ENCODE measurements at regions of chr22 and their contacts with region 1.

Region 1: DNA sequence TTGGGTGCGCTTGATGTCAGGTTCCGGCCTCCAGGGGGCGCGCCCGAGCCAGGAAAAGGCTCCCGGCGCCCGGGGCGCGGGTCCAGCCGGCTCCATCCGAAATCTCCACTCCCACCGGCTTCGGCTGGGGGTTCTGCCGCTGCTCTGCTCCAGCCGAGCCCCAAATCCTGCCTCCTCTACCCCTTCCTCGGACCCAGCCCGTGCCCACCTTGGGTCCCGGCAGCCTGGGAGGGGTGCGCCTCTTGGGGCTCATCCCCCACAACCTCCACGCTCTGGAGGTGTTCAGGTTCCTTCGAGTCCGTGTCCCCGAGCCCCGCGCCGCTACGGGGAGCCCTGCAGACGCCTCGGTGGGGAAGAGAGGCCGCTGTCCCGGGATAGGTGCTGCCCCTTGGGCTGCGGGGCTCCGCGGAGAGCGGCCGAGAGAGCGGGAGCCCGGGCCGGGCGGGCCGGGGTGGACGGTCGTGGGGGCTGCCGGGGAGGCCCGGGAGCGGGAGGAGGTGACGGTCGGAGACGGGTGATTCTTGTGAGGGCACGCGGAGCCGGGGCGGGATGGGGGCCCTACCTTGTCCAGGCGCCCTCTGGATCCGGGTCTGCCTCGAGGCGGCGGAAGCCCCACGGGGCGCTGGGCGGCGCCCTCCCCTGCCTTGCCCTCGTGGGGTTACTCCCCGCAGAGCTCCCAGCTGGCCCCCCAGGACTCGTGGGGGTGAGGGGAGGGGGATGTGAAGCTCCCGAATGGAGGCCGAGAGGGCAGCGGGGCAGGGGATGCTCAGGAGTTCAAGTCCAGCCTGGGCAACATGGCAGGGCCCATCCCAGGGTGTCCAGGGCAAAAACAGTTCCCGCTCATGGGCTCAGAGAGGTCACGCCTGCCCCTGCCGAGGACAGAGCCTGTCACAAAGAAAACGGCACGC is 13.2 kb upstream of the CYB5R3 start:
- DNase-seq: peak in 1 of 2 donors; percentile 88
- H3K4me3 ChIP-seq: peak overlapping the region; percentile 43 to 65
- H3K27ac ChIP-seq: peak overlapping the region; percentile 17 to 34
- H3K4me1 ChIP-seq: peaks cover 0 to 8% of the 10 kb centered on the region in 2 donors
- H3K27me3 ChIP-seq: no peaks in the 10 kb centered on the region
- CTCF ChIP-seq: peak; percentile 75 to 92 (median 77)

Region 2: GRCh38 chr22:42644422-42645340 is 17.7 kb before region 1 on chr22:
- intact Hi-C with region 1: no loop called
- DNase-seq: no peak
- H3K4me3 ChIP-seq: peak overlapping the region; percentile 74 to 97
- H3K27ac ChIP-seq: peak overlapping the region; percentile 88 to 98
- H3K4me1 ChIP-seq: peaks cover 19 to 63% of the 10 kb centered on the region in 2 donors
- H3K27me3 ChIP-seq: no peaks in the 10 kb centered on the region
- CTCF ChIP-seq: no peak

Region 3: GRCh38 chr22:42688241-42689211 is 26.2 kb after region 1 on chr22:
- intact Hi-C with region 1: loop called (anchors 1 kb)
- DNase-seq: peak; percentile 79 to 98
- H3K4me3 ChIP-seq: peak overlapping the region in 1 of 2 donors; percentile 31
- H3K27ac ChIP-seq: peak overlapping the region; percentile 93 to 97
- H3K4me1 ChIP-seq: peaks cover 39 to 56% of the 10 kb centered on the region in 2 donors
- H3K27me3 ChIP-seq: no peaks in the 10 kb centered on the region
- CTCF ChIP-seq: no peak

Region 4: GRCh38 chr22:42697542-42698013 is 35.2 kb after region 1 on chr22:
- intact Hi-C with region 1: loop called (anchors 5 kb)
- DNase-seq: peak; percentile 92 to 97
- H3K4me3 ChIP-seq: no peak overlapping the region
- H3K27ac ChIP-seq: peak overlapping the region; percentile 92 to 93
- H3K4me1 ChIP-seq: peaks cover 17 to 46% of the 10 kb centered on the region in 2 donors
- H3K27me3 ChIP-seq: no peaks in the 10 kb centered on the region
- CTCF ChIP-seq: no peak

Region 5: GRCh38 chr22:42720263-42721044 is 58.1 kb after region 1 on chr22 and contains the start of gene A4GALT:
- intact Hi-C with region 1: loop called (anchors 1 kb)
- DNase-seq: no peak
- H3K4me3 ChIP-seq: peak within 1 kb of the TSS; percentile 93
- H3K27ac ChIP-seq: peak within 1 kb of the TSS; percentile 90
- H3K4me1 ChIP-seq: peaks cover 0 to 8% of the 10 kb centered on the region in 2 donors
- H3K27me3 ChIP-seq: no peaks in the 10 kb centered on the region
- CTCF ChIP-seq: no peak
- total RNA-seq, gene A4GALT: 85.1 TPM

Region 6: DNA sequence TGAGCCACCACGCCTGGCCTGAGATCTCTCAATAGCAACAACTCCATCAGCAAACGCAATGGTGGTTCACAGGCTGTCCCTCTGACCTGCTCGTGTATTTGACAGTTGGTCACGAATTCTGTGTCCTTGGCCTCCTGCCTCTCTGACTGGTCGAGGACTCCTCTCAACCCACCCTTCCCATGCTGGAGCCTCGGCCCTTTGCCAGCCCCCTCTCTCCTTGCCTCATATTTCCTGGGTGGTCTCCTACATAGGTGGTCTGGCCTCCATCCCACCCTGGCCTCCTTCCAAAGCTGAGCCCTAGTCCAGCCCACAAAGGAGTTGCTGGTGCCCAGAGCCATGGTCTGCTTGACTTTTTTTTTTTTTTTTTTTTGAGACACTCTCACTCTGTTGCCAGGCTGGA is 69.7 kb after region 1 on chr22:
- intact Hi-C with region 1: no loop called
- DNase-seq: no peak
- H3K4me3 ChIP-seq: no peak overlapping the region
- H3K27ac ChIP-seq: no peak overlapping the region
- H3K4me1 ChIP-seq: peaks cover 0 to 5% of the 10 kb centered on the region in 2 donors
- H3K27me3 ChIP-seq: no peaks in the 10 kb centered on the region
- CTCF ChIP-seq: no peak

Region 7: GRCh38 chr22:42868751-42869251 is 206.4 kb after region 1 on chr22:
- intact Hi-C with region 1: loop called (anchors 5 kb)
- DNase-seq: peak; percentile 49 to 82
- H3K4me3 ChIP-seq: peak overlapping the region in 1 of 2 donors; percentile 22
- H3K27ac ChIP-seq: peak overlapping the region; percentile 71 to 73
- H3K4me1 ChIP-seq: peaks cover 10 to 15% of the 10 kb centered on the region in 2 donors
- H3K27me3 ChIP-seq: no peaks in the 10 kb centered on the region
- CTCF ChIP-seq: no peak

Region 8: GRCh38 chr22:43174941-43175531 is 512.7 kb after region 1 on chr22:
- intact Hi-C with region 1: no loop called
- DNase-seq: no peak
- H3K4me3 ChIP-seq: no peak overlapping the region
- H3K27ac ChIP-seq: no peak overlapping the region
- H3K4me1 ChIP-seq: no peaks in the 10 kb centered on the region
- H3K27me3 ChIP-seq: no peaks in the 10 kb centered on the region
- CTCF ChIP-seq: no peak